GM23248 (cell line): ENCODE measurements at regions of chr9 and their contacts with region 1.

Region 1: GRCh38 chr9:137286975-137287383 is 9.5 kb downstream of the TOR4A start:
- DNase-seq: peak; percentile 66
- H3K4me3 ChIP-seq: no peak overlapping the region
- H3K27ac ChIP-seq: no peak overlapping the region
- H3K4me1 ChIP-seq: no peaks in the 10 kb centered on the region
- H3K27me3 ChIP-seq: no peaks in the 10 kb centered on the region

Region 2: DNA sequence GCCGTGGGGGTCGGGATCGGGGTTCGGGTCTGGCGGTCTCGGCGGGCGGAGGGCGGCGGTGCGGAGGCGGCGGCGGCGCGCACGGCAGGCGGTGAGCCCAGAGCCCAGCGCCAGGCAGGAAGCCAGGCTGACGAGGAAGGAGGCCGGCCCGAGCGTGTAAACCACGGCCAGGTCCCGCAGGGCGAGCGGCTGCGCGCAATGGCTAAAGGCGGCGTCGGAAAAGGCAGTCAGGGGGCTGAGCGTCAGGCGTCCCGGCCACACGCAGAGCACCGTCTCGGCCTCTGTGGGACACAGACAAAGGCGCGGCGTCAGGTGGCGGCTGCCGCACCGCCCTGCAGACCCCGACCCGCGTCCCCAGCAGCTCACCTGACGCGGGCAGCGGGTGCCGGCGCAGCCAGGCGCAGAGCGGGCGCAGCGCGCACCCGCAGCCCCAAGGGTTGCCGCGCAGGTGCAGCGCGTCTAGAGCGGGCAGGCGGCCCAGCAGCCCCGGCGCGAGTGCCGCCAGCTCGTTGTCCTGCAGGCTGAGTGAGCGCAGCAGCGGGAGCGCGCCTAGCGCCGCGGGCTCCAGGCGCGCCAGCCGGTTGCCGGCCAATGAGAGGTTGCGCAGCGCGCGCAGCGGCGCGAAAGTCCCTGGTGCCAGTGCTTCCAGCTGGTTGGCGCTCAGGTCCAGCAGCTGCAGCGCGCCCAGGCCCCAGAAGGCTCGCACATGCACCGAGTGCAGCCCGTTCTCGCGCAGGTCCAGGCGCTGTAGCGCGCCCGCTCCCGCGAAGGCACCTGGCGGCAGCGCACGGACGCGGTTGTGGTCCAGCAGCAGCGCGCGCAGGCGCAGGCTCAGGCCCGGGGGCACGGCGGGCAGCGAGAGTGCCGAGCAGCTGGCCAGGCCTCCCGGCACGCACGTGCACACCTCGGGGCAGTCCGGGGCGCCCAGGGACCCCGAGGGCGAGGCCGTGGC is 117.8 kb before region 1 on chr9:
- in situ Hi-C with region 1: no loop called
- DNase-seq: peak; percentile 66
- H3K4me3 ChIP-seq: peak overlapping the region; percentile 36
- H3K27ac ChIP-seq: no peak overlapping the region
- H3K4me1 ChIP-seq: no peaks in the 10 kb centered on the region
- H3K27me3 ChIP-seq: peaks cover 34% of the 10 kb centered on the region

Region 3: DNA sequence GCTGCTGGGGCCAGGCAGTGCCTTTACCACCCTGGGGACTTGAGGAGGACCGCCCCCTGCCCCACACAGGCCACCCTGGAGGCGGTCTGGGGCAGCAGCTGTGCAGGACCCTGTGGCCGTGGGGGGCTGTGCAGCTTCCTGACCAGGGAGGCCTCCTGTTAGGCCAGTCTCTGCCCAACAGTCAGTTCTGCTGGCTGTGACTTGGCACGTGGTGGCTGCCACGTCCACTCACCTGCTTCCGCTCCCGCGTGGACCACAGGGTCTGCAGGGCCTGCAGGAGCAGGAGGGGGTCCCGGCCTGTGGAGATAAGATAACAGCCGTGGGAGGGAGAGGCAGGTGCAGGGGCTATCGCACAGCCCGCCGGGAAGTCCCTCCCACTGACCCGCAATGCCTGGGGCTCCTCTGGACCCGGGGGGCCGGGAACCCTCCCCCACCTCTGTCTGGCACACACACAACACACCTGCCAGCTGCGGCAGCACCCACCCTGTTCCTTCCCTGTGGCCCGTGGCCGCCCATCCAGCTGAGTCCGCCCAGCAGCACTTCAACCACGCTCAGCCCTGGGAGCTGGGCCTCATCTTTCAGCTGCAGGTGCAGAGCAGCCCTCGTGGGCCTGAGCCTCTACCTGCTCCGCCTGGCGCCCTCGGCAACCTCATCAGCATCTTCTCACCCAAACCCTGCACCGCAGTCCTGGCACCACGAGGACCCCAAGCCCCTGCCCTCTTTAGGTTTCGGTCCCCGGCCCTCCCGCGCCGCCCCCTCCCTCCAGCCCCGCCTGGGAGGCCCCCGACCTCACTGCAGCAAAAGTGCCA is 96.3 kb after region 1 on chr9:
- in situ Hi-C with region 1: no loop called
- DNase-seq: no peak
- H3K4me3 ChIP-seq: no peak overlapping the region
- H3K27ac ChIP-seq: no peak overlapping the region
- H3K4me1 ChIP-seq: no peaks in the 10 kb centered on the region
- H3K27me3 ChIP-seq: no peaks in the 10 kb centered on the region

Region 4: DNA sequence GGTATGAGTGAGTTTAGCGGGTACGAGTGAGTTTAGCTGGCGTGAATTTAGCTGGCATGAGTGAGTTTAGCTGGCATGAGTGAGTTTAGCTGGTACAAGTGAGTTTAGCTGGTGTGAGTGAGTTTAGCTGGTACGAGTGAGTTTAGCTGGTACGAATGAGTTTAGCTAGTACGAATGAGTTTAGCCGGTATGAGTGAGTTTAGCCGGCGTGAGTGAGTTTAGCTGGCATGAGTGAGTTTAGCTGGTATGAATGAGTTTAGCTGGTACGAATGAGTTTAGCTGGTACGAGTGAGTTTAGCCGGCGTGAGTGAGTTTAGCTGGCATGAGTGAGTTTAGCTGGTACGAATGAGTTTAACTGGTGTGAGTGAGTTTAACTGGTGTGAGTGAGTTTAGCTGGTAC is 222.2 kb after region 1 on chr9:
- in situ Hi-C with region 1: no loop called
- DNase-seq: no peak
- H3K4me3 ChIP-seq: no peak overlapping the region
- H3K27ac ChIP-seq: no peak overlapping the region
- H3K4me1 ChIP-seq: peaks cover 4% of the 10 kb centered on the region; the same call in 1 of the 2 replicates
- H3K27me3 ChIP-seq: no peaks in the 10 kb centered on the region

Region 5: GRCh38 chr9:137521405-137521985 is 234.5 kb after region 1 on chr9:
- in situ Hi-C with region 1: loop called (anchors 10 kb)
- DNase-seq: no peak
- H3K4me3 ChIP-seq: no peak overlapping the region
- H3K27ac ChIP-seq: no peak overlapping the region
- H3K4me1 ChIP-seq: no peaks in the 10 kb centered on the region
- H3K27me3 ChIP-seq: no peaks in the 10 kb centered on the region